ENCODE measurements at regions of chr18 and their contacts with region 1.

Region 1: DNA sequence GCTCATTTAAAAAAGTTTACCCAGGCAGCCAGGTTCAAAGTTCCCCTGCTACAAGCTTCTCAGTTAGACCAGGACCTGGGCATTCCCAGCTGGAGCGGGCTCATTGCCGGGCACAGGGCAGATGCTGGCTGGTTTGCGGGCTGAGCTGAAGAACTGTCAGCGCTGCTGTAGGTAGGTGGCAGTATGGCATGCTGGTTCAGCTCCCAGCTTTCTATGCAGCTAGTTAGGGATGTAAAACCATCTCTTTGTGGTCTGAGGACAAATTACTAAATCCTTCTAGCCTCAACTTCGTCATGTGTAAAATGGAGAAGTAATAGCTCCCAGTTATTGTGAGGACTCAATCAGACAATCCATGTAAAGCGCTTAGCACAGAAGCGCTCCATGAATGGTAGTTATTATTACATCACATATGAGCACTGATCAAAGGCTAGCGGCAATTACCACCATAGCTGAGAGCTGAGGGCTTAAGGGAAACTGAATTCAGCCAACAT is 2.4 kb upstream of the LDLRAD4 start:
- DNase-seq: peak; percentile 51
- ATAC-seq: peak; percentile 46
- H3K4me3 Mint-ChIP-seq: peak overlapping the region; percentile 77
- H3K27ac Mint-ChIP-seq: no peak overlapping the region
- H3K4me1 Mint-ChIP-seq: peaks cover 27% of the 10 kb centered on the region
- H3K27me3 Mint-ChIP-seq: peaks cover 54% of the 10 kb centered on the region
- CTCF ChIP-seq: no peak

Region 2: GRCh38 chr18:13112982-13113381 is 103.2 kb before region 1 on chr18:
- CTCF ChIA-PET with region 1: interaction called, 16 read pairs
- POLR2A ChIA-PET with region 1: no interaction called
- DNase-seq: peak; percentile 82
- ATAC-seq: peak; percentile 100
- H3K4me3 Mint-ChIP-seq: no peak overlapping the region
- H3K27ac Mint-ChIP-seq: no peak overlapping the region
- H3K4me1 Mint-ChIP-seq: no peaks in the 10 kb centered on the region; the same call in 1 of the 2 replicates
- H3K27me3 Mint-ChIP-seq: no peaks in the 10 kb centered on the region
- CTCF ChIP-seq: no peak

Region 3: GRCh38 chr18:13525381-13526029 is 309.4 kb after region 1 on chr18:
- CTCF ChIA-PET with region 1: interaction called, 23 read pairs
- POLR2A ChIA-PET with region 1: no interaction called
- DNase-seq: peak; percentile 20
- ATAC-seq: peak; percentile 55
- H3K4me3 Mint-ChIP-seq: no peak overlapping the region
- H3K27ac Mint-ChIP-seq: no peak overlapping the region
- H3K4me1 Mint-ChIP-seq: no peaks in the 10 kb centered on the region
- H3K27me3 Mint-ChIP-seq: no peaks in the 10 kb centered on the region
- CTCF ChIP-seq: no peak

Region 4: GRCh38 chr18:13530879-13531387 is 314.8 kb after region 1 on chr18:
- CTCF ChIA-PET with region 1: interaction called, 23 read pairs
- POLR2A ChIA-PET with region 1: no interaction called
- DNase-seq: peak; percentile 49
- ATAC-seq: peak; percentile 81
- H3K4me3 Mint-ChIP-seq: no peak overlapping the region
- H3K27ac Mint-ChIP-seq: no peak overlapping the region
- H3K4me1 Mint-ChIP-seq: peaks cover 6% of the 10 kb centered on the region; the same call in 1 of the 2 replicates
- H3K27me3 Mint-ChIP-seq: no peaks in the 10 kb centered on the region
- CTCF ChIP-seq: no peak